ENCODE measurements at regions of chr16 and their contacts with region 1.

Region 1: GRCh38 chr16:11497851-11498289 is 88.8 kb downstream of the LITAF start:
- DNase-seq: peak; percentile 54 to 83
- H3K4me3 ChIP-seq: no peak overlapping the region
- H3K27ac ChIP-seq: peak overlapping the region; percentile 90 to 91
- H3K4me1 ChIP-seq: peaks cover 6 to 56% (median 46%) of the 10 kb centered on the region in 4 donors
- H3K27me3 ChIP-seq: no peaks in the 10 kb centered on the region
- CTCF ChIP-seq: no peak

Region 2: DNA sequence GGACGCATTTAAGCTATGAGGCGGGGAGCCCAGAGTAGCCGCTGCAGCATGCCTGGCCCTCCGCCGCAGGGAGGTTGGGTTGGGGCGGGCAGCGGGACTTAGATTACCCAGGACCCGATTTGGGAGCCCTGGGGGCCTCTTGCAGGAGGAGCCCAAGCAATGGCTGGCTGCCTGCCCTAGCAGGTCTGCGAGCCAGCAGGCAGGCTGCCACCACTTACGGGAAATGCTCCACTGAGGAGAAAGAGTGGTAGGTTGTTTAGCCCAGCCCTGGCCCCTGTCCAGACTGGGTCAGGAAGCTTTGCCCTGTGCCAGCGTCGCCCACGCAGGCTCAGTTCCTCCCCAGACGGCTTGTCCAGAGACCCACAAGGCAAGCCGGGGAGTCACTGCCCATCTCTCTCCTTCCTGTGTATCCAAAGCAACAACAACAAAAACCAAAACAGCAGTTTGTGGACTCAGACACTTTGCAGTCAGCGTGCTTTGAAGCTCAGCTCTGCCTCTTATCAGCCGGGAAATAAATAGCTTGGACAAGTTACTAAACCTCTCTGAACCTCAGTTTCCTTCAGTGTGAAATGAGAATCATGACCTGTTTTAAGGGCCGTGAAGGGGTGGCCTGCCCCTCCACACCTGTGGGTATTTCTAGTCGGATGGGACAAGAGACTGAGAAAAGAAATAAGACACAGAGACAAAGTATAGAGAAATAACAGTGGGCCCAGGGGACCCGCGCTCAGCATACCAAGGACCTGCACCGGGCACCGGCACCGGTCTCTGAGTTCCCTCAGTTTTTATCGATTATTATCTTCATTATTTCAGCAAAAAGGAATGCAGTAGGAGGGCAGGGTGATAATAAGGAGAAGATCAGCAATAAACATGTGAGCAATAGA is 668.8 kb before region 1 on chr16:
- intact Hi-C with region 1: loop called (anchors 5 kb)
- DNase-seq: peak; percentile 91 to 98
- H3K4me3 ChIP-seq: peak overlapping the region; percentile 14 to 15
- H3K27ac ChIP-seq: peak overlapping the region; percentile 93
- H3K4me1 ChIP-seq: peaks cover 0 to 36% (median 30%) of the 10 kb centered on the region in 4 donors
- H3K27me3 ChIP-seq: no peaks in the 10 kb centered on the region
- CTCF ChIP-seq: no peak

Region 3: GRCh38 chr16:10981697-10982216 is 516.1 kb before region 1 on chr16:
- intact Hi-C with region 1: no loop called
- DNase-seq: no peak
- H3K4me3 ChIP-seq: no peak overlapping the region
- H3K27ac ChIP-seq: no peak overlapping the region
- H3K4me1 ChIP-seq: peaks cover 0 to 18% (median 15%) of the 10 kb centered on the region in 4 donors
- H3K27me3 ChIP-seq: no peaks in the 10 kb centered on the region
- CTCF ChIP-seq: no peak

Region 4: GRCh38 chr16:11452746-11453389 is 45.0 kb before region 1 on chr16:
- intact Hi-C with region 1: no loop called
- DNase-seq: peak in 1 of 2 donors; percentile 25
- H3K4me3 ChIP-seq: no peak overlapping the region
- H3K27ac ChIP-seq: peak overlapping the region; percentile 68 to 72
- H3K4me1 ChIP-seq: peaks cover 0 to 15% (median 4%) of the 10 kb centered on the region in 4 donors
- H3K27me3 ChIP-seq: no peaks in the 10 kb centered on the region
- CTCF ChIP-seq: no peak

Region 5: DNA sequence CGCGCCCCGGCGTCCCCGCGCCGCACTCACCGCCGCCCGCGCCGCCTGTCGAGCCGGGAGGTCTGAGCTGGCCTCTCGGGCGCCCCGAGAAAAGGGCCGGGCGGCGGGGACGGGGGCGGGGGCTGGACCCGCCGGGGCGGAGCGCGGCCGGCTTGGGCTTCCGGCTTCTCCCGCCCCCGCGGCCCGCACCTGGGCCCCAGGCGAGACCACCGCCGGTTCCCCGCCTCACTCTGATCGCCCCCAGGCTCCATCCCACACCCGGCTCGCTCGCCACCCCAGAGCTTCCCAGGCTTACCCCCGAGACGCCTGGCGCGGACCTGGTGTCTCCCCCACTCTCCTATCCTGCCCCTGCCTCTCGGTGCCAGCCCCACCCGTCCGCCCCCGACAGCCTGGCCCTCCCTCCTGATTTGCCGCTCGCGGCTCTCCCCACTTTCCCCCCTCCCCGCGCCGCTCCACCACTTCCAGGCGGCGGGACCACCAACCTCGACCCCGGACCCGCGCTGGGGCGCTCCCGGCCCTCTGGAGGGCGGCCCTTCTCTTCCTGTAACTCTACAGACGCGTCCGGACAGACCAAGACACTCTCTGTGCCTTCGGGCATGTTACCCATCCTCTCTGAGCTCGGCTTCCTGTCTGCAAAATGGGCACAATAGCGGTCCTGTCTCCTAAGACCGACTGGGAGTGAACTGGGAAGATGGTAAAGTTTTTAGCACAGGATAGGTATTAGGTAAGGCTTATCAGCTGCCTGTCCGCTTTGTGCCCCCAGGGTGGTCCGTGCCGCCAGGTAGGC is 89.2 kb after region 1 on chr16 and contains the start of gene LITAF:
- intact Hi-C with region 1: loop called (anchors 5 kb)
- DNase-seq: peak; percentile 56 to 86
- H3K4me3 ChIP-seq: peak within 1 kb of the TSS; percentile 78 to 83
- H3K27ac ChIP-seq: peak within 1 kb of the TSS; percentile 96
- H3K4me1 ChIP-seq: peaks cover 0 to 43% (median 20%) of the 10 kb centered on the region in 4 donors
- H3K27me3 ChIP-seq: no peaks in the 10 kb centered on the region
- CTCF ChIP-seq: peak in 1 of 2 experiments; percentile 8

Region 6: GRCh38 chr16:12170091-12171040 is 672.5 kb after region 1 on chr16:
- intact Hi-C with region 1: no loop called
- DNase-seq: no peak
- H3K4me3 ChIP-seq: no peak overlapping the region
- H3K27ac ChIP-seq: no peak overlapping the region
- H3K4me1 ChIP-seq: no peaks in the 10 kb centered on the region
- H3K27me3 ChIP-seq: no peaks in the 10 kb centered on the region
- CTCF ChIP-seq: no peak